ENCODE measurements at regions of chr19 and their contacts with region 1.

Region 1: DNA sequence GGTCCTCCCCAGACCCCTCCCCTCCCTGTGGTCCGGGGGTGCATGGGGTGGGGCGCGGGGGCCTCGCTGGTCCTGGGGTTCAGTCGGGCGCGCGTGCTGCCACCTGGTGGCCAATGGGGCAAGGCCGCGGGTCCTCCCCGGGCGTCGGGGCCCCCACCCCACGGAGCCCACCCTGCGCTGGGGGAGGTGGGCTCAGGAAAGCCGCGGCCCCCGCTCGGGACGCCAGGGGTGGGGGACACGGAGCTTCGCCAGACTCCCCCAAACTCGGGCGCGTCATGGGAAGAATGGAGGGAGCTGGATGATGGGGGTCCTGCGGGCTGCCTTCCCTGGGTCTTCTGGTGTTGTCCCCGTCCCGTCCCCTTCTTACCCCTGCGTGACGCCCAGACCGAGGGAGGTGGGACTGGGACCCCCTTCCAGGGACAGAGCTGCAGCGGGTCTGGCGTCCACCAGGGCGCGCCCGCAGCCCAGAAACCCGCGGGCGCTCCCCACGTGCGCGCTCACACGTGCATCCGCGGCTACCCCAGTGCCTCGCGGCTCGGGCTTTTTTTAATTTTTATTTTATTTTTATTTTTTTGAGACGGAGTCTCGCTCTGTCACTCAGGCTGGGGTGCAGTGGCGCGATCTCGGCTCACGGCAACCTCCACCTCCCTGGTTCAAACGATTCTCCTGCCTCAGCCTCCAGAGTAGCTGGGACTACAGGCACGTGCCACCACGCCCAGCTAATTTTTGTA is 19.8 kb upstream of the TCF3 start:
- DNase-seq: peak; percentile 81 to 84 (median 83)
- ATAC-seq: peak; percentile 85
- H3K4me3 ChIP-seq: peak overlapping the region; percentile 51
- H3K27ac ChIP-seq: peak overlapping the region; percentile 81
- H3K4me1 ChIP-seq: peaks cover 17 to 76% of the 10 kb centered on the region in 2 experiments
- H3K27me3 ChIP-seq: no peaks in the 10 kb centered on the region
- CTCF ChIP-seq: peak; percentile 91 to 92 (median 91)
- EP300 ChIP-seq: no peak
- POLR2A ChIP-seq: no peak
- RAD21 ChIP-seq: peak; percentile 98 to 99

Region 2: DNA sequence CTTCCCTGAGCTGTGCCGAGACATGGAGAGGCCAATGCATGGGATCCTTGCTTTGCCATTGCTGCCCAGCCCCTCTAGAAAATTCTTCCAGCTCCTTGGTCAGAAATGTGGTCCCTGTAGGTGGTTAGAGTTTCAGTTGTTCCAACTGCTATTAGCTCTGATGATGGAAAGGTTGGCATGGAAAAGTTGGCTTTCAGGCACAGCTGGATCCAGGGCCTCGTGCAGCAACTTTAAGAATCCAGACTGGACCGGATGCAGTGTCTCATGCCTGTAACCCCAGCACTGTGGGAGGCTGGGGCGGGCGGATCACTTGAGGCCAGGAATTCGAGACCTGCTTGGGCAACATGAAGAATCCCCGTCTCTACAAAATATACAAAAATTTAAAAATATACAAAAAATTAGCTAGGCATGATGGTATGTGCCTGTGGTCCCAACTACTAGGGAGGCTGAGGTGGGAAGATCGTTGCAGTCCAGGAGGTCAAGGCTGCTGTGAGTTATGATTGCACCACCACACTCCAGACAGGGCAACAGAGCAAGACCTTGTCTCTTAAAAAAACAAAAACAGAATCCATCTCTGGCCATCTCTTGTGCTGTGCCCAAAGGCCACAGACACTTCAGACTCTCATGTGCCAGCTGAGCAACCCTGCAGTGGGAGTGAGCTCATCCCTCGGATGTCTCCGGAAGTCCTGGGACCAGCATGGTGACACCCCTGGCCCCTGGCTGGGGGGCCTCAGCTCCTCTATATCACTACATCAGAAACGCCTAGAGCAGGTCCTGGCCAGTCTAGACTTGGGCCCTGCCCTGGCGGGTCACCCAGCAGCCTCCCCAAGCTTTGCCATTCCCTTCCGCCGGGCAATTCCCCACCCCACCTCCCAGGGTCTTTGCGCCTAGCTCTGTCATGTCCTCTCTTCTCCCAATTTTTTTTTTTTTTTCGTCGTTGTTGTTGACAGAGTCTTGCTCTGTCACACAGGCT is 120.8 kb before region 1 on chr19:
- CTCF ChIA-PET with region 1: interaction called, 33 read pairs
- POLR2A ChIA-PET with region 1: interaction called, 4 read pairs
- in situ Hi-C with region 1: no loop called
- intact Hi-C with region 1: loop called (anchors 2 kb)
- DNase-seq: no peak
- ATAC-seq: no peak
- H3K4me3 ChIP-seq: no peak overlapping the region
- H3K27ac ChIP-seq: no peak overlapping the region
- H3K4me1 ChIP-seq: peaks cover 3 to 29% of the 10 kb centered on the region in 2 experiments; a peak in 3 of 5 replicates
- H3K27me3 ChIP-seq: no peaks in the 10 kb centered on the region; a peak in 1 of 5 replicates
- CTCF ChIP-seq: no peak
- EP300 ChIP-seq: no peak
- POLR2A ChIP-seq: no peak
- RAD21 ChIP-seq: no peak

Region 3: GRCh38 chr19:1624458-1624857 is 47.7 kb before region 1 on chr19:
- CTCF ChIA-PET with region 1: interaction called, 7 read pairs
- POLR2A ChIA-PET with region 1: no interaction called
- in situ Hi-C with region 1: no loop called
- intact Hi-C with region 1: loop called (anchors 5 kb)
- DNase-seq: peak; percentile 69 to 84 (median 77)
- ATAC-seq: peak; percentile 99
- H3K4me3 ChIP-seq: no peak overlapping the region
- H3K27ac ChIP-seq: peak overlapping the region; percentile 61; the same call in 1 of the 3 replicates
- H3K4me1 ChIP-seq: peaks cover 0 to 60% of the 10 kb centered on the region in 2 experiments; a peak in 2 of 5 replicates
- H3K27me3 ChIP-seq: no peaks in the 10 kb centered on the region
- CTCF ChIP-seq: peak; percentile 90 to 94 (median 93)
- EP300 ChIP-seq: no peak
- POLR2A ChIP-seq: no peak
- RAD21 ChIP-seq: peak; percentile 36 to 69; a peak in 3 of 4 replicates

Region 4: DNA sequence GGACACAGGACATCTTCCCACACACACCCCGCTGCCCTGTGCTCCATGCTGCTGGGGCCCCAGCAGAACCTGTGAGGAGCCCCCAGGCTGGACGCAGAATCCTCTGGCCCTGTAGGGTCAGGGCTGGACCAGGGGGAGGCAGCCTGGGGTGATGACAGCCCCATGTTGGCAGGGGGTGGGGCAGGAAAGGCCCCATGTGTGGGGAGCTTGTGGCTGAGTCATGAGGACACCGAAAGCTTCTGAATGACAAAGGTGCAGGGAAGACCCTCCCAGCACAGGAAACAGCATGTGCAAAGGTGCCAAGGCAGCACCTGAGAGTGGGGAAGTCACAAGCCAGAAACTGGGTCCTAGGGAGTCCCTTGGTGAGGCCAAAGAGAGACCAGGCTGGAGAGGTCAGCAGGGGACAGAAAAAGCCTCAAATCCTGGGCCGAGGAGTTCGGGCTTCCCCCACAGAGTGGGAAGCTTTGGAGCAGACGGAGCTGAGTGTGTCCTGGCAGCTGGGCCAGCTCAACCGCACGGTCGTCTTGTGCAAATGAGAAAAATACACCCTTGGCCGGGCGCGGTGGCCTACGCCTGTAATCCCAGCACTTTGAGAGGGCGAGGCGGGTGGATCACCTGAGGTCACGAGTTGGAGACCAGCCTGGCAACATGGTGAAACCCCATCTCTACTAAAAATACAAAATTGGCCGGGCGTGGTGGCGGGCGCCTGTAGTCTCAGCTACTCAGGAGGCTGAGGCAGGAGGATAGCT is 122.4 kb after region 1 on chr19:
- CTCF ChIA-PET with region 1: interaction called, 29 read pairs
- POLR2A ChIA-PET with region 1: interaction called, 3 read pairs
- in situ Hi-C with region 1: no loop called
- intact Hi-C with region 1: loop called (anchors 1 kb)
- DNase-seq: peak in 3 of 4 experiments; percentile 47 to 56 (median 51)
- ATAC-seq: no peak; the same call in 2 of the 3 replicates
- H3K4me3 ChIP-seq: no peak overlapping the region
- H3K27ac ChIP-seq: no peak overlapping the region
- H3K4me1 ChIP-seq: peaks cover 0 to 43% of the 10 kb centered on the region in 2 experiments; a peak in 3 of 5 replicates
- H3K27me3 ChIP-seq: no peaks in the 10 kb centered on the region
- CTCF ChIP-seq: no peak
- EP300 ChIP-seq: no peak
- POLR2A ChIP-seq: no peak
- RAD21 ChIP-seq: no peak